Right ventricle myocardium inferior (tissue), 1 donor: ENCODE measurements at regions of chr1 and their contacts with region 1.

Region 1: DNA sequence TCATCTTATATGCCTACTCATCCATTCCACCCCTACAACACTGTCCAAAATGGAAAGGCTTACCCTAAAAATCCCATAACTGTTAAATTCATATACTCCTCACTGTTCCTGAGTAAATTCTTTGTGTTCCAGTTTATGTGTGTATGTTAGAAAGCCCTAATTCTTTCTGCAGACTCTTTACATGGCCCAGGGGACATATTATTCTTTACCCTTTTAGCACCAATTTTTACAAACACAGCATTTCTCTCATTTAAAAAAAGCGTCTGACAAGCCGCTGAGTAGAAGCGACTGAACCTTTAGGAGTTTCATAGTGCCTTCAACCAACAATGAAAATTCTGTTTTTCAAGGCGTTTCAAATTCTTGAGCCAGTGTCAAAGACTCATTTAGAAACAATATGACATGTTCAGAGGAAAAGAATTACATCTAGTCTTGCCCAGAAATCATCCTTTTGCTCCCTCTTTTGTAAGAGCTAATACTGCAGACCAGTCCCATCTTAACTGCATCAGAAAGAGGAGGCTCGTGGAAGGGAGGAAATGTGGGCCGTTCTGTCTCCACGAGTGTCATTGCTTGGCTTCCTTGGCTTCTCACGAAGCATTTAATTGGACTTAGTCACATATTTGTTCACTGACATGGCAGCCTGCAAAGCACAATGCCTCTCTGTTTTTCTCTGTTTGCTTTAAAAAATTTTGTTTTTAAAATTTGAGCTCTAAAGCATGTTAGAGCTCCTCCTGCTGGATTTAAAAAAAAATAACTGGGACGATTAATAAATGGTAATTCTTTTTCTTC is 21.3 kb upstream of the C1orf105 start:
- DNase-seq: no peak
- ATAC-seq: peak; percentile 92

Region 2: DNA sequence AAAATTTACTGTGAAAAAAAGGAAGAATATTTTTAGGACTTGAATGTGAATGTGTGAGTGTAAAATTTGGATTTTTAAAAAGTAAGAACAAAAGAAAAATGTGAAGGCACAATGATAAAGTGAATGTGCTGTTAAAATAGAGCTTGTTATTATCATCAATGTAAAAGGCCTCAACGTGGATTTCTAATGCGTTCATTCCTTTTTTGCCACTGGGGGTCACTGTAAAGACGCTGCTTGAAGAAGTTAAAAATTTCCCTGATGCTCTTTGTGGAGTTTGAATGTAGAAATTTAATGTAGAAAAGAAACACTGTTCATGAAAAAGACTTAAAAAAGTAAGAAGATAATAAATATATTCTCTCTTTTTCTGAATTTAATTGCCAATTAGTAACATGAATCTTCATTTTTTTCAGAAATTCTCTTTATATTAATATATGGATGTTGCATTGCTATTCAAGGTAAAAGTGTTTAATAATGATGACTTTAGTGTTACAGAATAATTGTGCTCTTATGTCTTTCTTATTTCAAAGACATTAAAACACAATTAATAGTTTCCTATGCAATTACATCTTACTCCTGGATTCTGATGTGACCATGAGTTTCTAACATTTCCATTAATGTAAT is 396.3 kb before region 1 on chr1:
- intact Hi-C with region 1: loop called (anchors 5 kb)
- DNase-seq: no peak
- ATAC-seq: no peak

Region 3: GRCh38 chr1:172089768-172090510 is 309.2 kb before region 1 on chr1:
- intact Hi-C with region 1: loop called (anchors 2 kb)
- DNase-seq: no peak
- ATAC-seq: peak; percentile 78

Region 4: DNA sequence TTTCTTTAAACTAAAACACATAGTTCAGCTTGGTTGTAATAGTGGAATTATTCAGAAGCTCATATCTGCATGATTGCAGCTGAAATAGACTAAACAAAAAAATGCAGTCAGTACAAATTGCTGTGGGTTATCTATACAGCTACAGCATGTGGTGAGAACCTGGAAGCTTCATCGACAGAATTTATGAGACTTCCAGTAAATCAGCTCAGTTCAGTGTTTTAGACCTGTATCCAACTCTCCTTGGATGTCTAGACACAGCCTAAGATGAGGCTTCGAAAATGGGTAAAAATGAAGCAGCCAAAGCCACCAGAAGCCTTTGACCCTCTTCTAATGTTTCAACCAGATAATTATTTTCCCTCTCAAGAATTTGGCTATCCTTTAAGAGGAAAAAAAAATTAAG is 105.7 kb before region 1 on chr1:
- intact Hi-C with region 1: loop called (anchors 10 kb)
- DNase-seq: no peak
- ATAC-seq: no peak

Region 5: DNA sequence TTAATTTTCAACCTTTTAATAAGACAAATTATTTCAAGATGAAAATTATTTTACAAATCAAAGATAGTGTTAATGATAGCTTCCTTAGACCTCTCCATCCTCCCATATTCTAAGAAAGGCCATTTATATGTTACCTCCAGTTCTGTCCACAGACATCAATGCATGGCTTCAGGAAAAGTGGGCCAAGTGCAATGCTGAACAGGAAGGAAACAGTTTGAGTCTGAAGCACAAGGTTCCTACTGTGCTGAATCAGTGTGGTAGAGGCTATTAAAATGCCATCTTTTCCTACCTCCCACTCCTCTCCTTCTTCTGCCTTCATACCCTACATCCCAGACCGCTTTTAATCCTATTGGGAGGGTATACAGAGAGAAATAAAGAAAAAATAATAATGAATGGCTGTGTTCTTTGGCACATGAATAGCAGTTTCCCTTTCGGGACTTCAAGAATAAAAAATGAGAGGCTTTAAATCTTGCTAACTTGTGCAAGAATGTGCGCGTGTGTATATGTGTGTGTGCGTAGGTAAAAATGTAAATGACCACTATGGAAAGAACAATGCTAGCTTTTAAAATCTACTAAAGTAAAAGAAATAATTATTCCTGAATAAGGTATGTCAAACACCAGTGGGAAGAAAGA is 41.3 kb before region 1 on chr1:
- intact Hi-C with region 1: loop called (anchors 5 kb)
- DNase-seq: no peak
- ATAC-seq: no peak